ENCODE measurements at regions of chr6 and their contacts with region 1.

Region 1: GRCh38 chr6:52995913-52996645 is 995 bp upstream of the GSTA4 start:
- DNase-seq: peak; percentile 68
- ATAC-seq: no peak
- H3K4me3 Mint-ChIP-seq: peak overlapping the region; percentile 83
- H3K27ac Mint-ChIP-seq: peak overlapping the region; percentile 77
- H3K4me1 Mint-ChIP-seq: peaks cover 32% of the 10 kb centered on the region
- H3K27me3 Mint-ChIP-seq: peaks cover 4% of the 10 kb centered on the region

Region 2: DNA sequence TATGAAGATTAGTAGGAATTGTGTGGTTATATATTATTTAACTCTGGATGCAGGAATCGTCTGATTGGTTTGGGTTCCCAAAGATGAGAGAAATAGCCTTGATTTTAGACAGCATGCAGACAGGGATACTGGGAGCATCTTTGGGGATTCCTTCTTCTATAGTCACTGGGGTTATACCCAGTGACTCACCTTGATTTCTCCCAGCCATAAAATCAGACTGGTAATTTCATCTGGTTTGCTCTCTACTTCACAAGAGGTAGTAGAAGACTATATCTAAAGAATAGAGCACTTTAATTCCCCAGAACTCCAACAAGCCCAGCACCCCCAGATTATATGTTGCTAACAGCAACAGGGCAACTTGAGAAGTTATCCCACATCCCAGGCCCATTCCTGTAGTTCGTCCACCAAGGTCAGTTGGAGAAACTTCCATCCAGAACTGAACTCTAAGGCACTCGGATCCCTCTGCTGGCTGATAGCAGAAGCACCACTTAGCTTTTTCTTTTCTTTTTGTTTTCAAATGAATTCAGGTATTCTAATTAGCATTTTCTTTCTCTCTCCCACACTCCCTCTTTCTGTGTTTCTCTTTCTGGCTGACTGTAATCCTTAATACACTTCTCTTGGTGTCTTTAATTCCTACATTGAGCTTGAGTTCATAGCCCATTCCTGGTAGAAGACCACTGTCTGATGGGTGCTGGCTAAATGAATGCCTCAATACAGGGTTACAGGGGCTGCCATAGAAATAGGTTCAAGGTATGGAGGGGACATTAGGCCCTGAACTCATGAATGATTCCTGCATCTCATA is 596.4 kb before region 1 on chr6:
- CTCF ChIA-PET with region 1: no interaction called
- POLR2A ChIA-PET with region 1: no interaction called
- intact Hi-C with region 1: loop called in 1 of 2 experiments (anchors 10 kb)
- DNase-seq: peak; percentile 54
- ATAC-seq: peak; percentile 51
- H3K4me3 Mint-ChIP-seq: no peak overlapping the region
- H3K27ac Mint-ChIP-seq: no peak overlapping the region
- H3K4me1 Mint-ChIP-seq: peaks cover 64% of the 10 kb centered on the region
- H3K27me3 Mint-ChIP-seq: no peaks in the 10 kb centered on the region

Region 3: DNA sequence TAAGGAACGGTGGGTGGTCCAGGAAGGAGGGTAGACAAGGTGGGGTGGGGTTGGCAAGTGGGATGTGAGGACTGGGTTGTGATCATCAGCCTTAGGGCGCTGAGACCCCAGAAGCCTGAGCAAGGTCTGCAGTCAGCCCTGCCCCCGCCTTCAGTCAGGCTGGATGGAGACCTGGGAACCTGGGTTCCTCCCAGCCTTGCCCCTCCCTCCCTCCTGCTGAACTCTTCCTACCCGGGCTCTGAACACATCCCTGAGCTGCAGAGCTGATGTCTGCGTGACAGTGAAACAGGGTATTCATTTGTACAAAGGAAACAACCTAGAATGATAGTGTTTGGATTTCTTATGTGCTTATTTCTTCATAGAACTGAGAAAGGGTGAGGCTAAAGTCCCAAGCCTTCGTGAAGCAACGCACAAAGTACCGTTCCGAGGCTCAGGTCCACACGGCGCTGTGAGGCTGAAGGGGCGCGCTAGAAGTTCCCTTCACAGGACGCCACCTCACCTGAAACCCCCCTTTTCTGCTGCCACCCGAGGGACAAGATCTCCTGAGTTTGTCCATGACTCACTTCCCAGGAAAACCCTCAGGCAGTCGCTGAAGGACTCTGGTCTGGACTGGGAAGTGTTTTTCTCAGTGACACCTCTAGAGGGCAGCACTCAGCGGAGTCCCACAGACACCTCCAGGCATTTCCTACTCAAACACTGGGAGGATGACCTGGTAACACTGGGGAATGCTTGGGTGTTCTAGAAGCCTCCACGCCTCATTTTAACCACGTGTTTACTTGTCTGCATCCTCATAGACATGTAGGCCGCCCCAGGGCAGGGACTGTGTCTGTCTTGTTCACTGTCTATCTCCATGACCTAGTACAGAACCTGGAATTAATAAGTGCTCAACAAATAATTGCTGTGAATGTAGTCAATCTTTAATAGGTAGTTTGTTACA is 156.7 kb before region 1 on chr6:
- CTCF ChIA-PET with region 1: no interaction called
- POLR2A ChIA-PET with region 1: no interaction called
- intact Hi-C with region 1: loop called in 1 of 2 experiments (anchors 2 kb)
- DNase-seq: peak; percentile 67
- ATAC-seq: peak; percentile 91
- H3K4me3 Mint-ChIP-seq: no peak overlapping the region
- H3K27ac Mint-ChIP-seq: no peak overlapping the region
- H3K4me1 Mint-ChIP-seq: peaks cover 3% of the 10 kb centered on the region
- H3K27me3 Mint-ChIP-seq: peaks cover 30% of the 10 kb centered on the region

Region 4: GRCh38 chr6:52946306-52946705 is 49.8 kb before region 1 on chr6:
- CTCF ChIA-PET with region 1: no interaction called
- POLR2A ChIA-PET with region 1: no interaction called
- intact Hi-C with region 1: no loop called
- DNase-seq: no peak
- ATAC-seq: no peak
- H3K4me3 Mint-ChIP-seq: no peak overlapping the region
- H3K27ac Mint-ChIP-seq: no peak overlapping the region
- H3K4me1 Mint-ChIP-seq: peaks cover 7% of the 10 kb centered on the region
- H3K27me3 Mint-ChIP-seq: peaks cover 29% of the 10 kb centered on the region

Region 5: DNA sequence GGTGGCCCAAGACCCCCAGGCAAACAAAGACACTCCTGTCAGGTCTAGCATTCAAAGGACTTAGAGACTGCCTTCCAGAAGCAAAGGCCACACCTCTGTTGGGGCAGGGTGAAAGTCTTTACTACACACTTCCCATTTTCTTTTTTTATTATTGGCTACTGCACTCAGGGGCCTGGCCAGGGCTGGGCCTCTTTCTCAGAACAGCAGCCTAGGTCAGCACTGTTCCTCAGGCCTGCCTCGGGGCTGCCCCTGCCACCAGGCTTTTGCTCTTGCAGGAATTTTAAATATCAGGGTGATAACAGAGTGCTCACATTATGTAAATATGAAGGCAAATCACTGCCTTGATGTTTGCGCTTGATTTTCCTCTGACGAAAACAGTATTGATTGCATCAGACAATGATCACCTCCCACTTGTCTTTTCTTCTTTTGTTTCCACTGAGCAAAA is 19.5 kb before region 1 on chr6:
- CTCF ChIA-PET with region 1: interaction called, 5 read pairs
- POLR2A ChIA-PET with region 1: no interaction called
- intact Hi-C with region 1: loop called (anchors 1 to 2 kb)
- DNase-seq: peak; percentile 73
- ATAC-seq: peak; percentile 88
- H3K4me3 Mint-ChIP-seq: peak overlapping the region; percentile 38
- H3K27ac Mint-ChIP-seq: peak overlapping the region; percentile 93
- H3K4me1 Mint-ChIP-seq: peaks cover 46% of the 10 kb centered on the region
- H3K27me3 Mint-ChIP-seq: peaks cover 5% of the 10 kb centered on the region

Region 6: GRCh38 chr6:53064726-53065215 is 68.7 kb after region 1 on chr6:
- CTCF ChIA-PET with region 1: interaction called, 5 read pairs
- POLR2A ChIA-PET with region 1: interaction called, 3 read pairs
- intact Hi-C with region 1: loop called in 1 of 2 experiments (anchors 1 kb)
- DNase-seq: peak; percentile 98
- ATAC-seq: peak; percentile 84
- H3K4me3 Mint-ChIP-seq: peak overlapping the region; percentile 97
- H3K27ac Mint-ChIP-seq: peak overlapping the region; percentile 100
- H3K4me1 Mint-ChIP-seq: peaks cover 55% of the 10 kb centered on the region
- H3K27me3 Mint-ChIP-seq: no peaks in the 10 kb centered on the region